ENCODE measurements at regions of chr1 and their contacts with region 1.

Region 1: GRCh38 chr1:196660852-196661251 is 9.0 kb downstream of the CFH start:
- DNase-seq: peak; percentile 46
- H3K4me3 ChIP-seq: peak overlapping the region in 1 of 2 experiments; percentile 13; a peak in 1 of 4 replicates
- H3K27ac ChIP-seq: no peak overlapping the region
- H3K4me1 ChIP-seq: no peaks in the 10 kb centered on the region; a peak in 1 of 4 replicates
- H3K27me3 ChIP-seq: no peaks in the 10 kb centered on the region
- CTCF ChIP-seq: peak; percentile 74
- EP300 ChIP-seq: no peak
- RAD21 ChIP-seq: peak; percentile 93

Region 2: GRCh38 chr1:196148367-196148970 is 512.4 kb before region 1 on chr1:
- CTCF ChIA-PET with region 1: interaction called, 38 read pairs
- POLR2A ChIA-PET with region 1: no interaction called
- DNase-seq: peak; percentile 12
- H3K4me3 ChIP-seq: 0 out of 4 replicates have a peak overlapping the region, but pooled peaks of 1 of the 2 experiments have one; percentile 9
- H3K27ac ChIP-seq: no peak overlapping the region
- H3K4me1 ChIP-seq: no peaks in the 10 kb centered on the region; a peak in 2 of 4 replicates
- H3K27me3 ChIP-seq: no peaks in the 10 kb centered on the region
- CTCF ChIP-seq: peak; percentile 74
- EP300 ChIP-seq: no peak
- RAD21 ChIP-seq: peak; percentile 78

Region 3: GRCh38 chr1:196309386-196309785 is 351.5 kb before region 1 on chr1:
- CTCF ChIA-PET with region 1: interaction called, 35 read pairs
- POLR2A ChIA-PET with region 1: no interaction called
- DNase-seq: no peak
- H3K4me3 ChIP-seq: no peak overlapping the region
- H3K27ac ChIP-seq: no peak overlapping the region
- H3K4me1 ChIP-seq: no peaks in the 10 kb centered on the region; a peak in 1 of 4 replicates
- H3K27me3 ChIP-seq: no peaks in the 10 kb centered on the region
- CTCF ChIP-seq: peak; percentile 68
- EP300 ChIP-seq: no peak
- RAD21 ChIP-seq: peak; percentile 71

Region 4: GRCh38 chr1:196317535-196318522 is 343.0 kb before region 1 on chr1:
- CTCF ChIA-PET with region 1: interaction called, 35 read pairs
- POLR2A ChIA-PET with region 1: no interaction called
- DNase-seq: no peak
- H3K4me3 ChIP-seq: no peak overlapping the region
- H3K27ac ChIP-seq: no peak overlapping the region
- H3K4me1 ChIP-seq: no peaks in the 10 kb centered on the region; a peak in 1 of 4 replicates
- H3K27me3 ChIP-seq: no peaks in the 10 kb centered on the region
- CTCF ChIP-seq: peak; percentile 81
- EP300 ChIP-seq: no peak
- RAD21 ChIP-seq: peak; percentile 75

Region 5: DNA sequence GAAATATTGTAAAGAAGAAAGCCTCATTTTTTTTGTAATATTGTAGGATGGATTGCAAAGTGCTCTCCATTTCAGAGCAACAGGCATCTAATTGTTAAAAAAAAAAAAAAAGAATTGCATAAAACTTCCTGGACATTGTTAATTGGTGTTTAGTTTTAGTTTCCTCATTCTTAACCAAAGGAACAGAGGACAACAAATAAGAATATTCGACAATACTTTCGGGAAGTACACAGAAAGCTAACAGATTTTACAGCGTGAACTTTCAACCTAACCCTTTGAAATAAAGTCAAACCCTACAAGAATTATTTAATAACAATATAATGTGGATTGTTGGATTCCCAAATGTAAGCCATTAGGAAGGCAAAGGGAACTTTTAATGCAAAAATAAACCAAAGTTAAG is 337.0 kb before region 1 on chr1:
- CTCF ChIA-PET with region 1: interaction called, 14 read pairs
- POLR2A ChIA-PET with region 1: no interaction called
- DNase-seq: no peak
- H3K4me3 ChIP-seq: no peak overlapping the region
- H3K27ac ChIP-seq: no peak overlapping the region
- H3K4me1 ChIP-seq: no peaks in the 10 kb centered on the region; a peak in 1 of 4 replicates
- H3K27me3 ChIP-seq: no peaks in the 10 kb centered on the region
- CTCF ChIP-seq: no peak
- EP300 ChIP-seq: no peak
- RAD21 ChIP-seq: no peak

Region 6: DNA sequence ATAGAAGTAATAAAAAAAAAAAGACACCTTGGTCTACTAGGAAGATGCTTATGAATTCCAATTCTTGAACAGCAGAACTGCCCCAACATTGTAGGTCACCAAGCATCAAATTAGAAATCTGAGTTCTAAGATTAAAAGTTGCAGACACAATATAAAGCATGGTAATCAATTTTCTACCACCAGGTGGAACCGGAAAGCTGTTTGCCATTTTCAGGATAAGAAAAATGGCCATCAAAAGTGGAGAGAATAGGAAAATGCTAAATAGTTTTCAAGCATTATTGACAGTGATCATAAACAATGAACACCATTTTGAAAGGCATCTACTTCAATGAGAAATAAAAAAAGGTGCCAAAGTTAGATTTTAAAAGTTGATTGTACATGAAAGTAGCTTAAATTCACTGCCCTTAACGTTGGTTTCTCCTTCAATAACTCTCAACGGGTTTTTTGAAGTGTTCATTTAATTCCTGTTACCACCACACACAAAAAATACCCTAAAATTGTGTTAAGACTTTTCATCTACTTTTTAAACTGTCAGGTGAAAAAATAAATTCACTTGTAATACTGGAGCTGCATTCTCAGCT is 305.6 kb before region 1 on chr1:
- CTCF ChIA-PET with region 1: interaction called, 26 read pairs
- POLR2A ChIA-PET with region 1: no interaction called
- DNase-seq: peak; percentile 2
- H3K4me3 ChIP-seq: no peak overlapping the region
- H3K27ac ChIP-seq: no peak overlapping the region
- H3K4me1 ChIP-seq: no peaks in the 10 kb centered on the region; a peak in 1 of 4 replicates
- H3K27me3 ChIP-seq: no peaks in the 10 kb centered on the region
- CTCF ChIP-seq: peak; percentile 72
- EP300 ChIP-seq: no peak
- RAD21 ChIP-seq: peak; percentile 65